PC-3 (cell line): ENCODE measurements at regions of chr6 and their contacts with region 1.

Region 1: GRCh38 chr6:163324411-163325389 is 89.8 kb upstream of the QKI start:
- DNase-seq: peak; percentile 82
- ATAC-seq: peak; percentile 91
- H3K4me3 ChIP-seq: peak overlapping the region; percentile 52
- H3K27ac ChIP-seq: peak overlapping the region; percentile 96
- H3K4me1 ChIP-seq: peaks cover 30% of the 10 kb centered on the region
- H3K27me3 ChIP-seq: no peaks in the 10 kb centered on the region
- CTCF ChIP-seq: no peak

Region 2: GRCh38 chr6:162856885-162857284 is 467.8 kb before region 1 on chr6:
- CTCF ChIA-PET with region 1: no interaction called
- POLR2A ChIA-PET with region 1: no interaction called
- intact Hi-C with region 1: loop called (anchors 10 kb)
- DNase-seq: peak; percentile 66
- ATAC-seq: peak; percentile 86
- H3K4me3 ChIP-seq: peak overlapping the region; percentile 50
- H3K27ac ChIP-seq: no peak overlapping the region
- H3K4me1 ChIP-seq: no peaks in the 10 kb centered on the region
- H3K27me3 ChIP-seq: no peaks in the 10 kb centered on the region
- CTCF ChIP-seq: peak; percentile 65

Region 3: DNA sequence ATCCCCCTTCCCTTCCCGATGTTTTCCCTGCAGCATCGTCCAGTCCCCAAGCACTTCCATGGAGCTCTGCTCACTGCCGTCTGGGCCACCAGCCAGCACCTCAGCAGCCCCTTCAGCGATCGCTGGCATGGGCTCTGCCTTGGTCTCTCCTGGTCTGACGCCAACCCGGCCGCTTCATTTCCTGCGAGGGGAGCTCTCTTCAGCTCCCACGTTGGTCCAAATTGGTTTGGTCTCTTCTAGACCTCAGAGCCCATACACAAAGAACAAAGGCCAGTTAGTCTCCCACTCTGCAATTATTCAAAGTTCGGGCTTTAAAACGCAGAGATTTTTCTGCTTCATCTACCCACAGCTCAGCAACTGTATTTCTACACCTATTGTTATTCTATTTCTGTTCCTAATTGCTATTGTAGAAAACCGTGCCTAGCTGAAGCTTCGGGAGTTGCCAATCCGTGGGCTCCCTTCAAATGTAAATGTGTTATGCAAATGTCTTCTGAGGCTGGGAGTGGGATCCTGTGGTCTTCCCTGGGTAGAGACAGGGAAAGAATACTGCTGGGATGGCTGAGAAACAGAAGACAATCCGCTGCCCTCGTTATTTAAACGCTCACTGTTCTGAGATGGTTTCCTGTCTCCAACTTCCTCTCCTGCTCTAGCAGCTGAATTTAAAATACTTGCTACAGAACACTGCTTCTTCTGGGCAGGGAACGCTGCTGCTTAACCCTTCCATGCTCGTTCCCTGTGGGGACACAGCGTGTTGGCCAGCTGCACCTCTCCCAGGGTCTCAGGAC is 64.4 kb before region 1 on chr6:
- CTCF ChIA-PET with region 1: no interaction called
- POLR2A ChIA-PET with region 1: no interaction called
- intact Hi-C with region 1: no loop called
- DNase-seq: no peak
- ATAC-seq: no peak
- H3K4me3 ChIP-seq: no peak overlapping the region
- H3K27ac ChIP-seq: no peak overlapping the region
- H3K4me1 ChIP-seq: no peaks in the 10 kb centered on the region
- H3K27me3 ChIP-seq: no peaks in the 10 kb centered on the region
- CTCF ChIP-seq: no peak

Region 4: DNA sequence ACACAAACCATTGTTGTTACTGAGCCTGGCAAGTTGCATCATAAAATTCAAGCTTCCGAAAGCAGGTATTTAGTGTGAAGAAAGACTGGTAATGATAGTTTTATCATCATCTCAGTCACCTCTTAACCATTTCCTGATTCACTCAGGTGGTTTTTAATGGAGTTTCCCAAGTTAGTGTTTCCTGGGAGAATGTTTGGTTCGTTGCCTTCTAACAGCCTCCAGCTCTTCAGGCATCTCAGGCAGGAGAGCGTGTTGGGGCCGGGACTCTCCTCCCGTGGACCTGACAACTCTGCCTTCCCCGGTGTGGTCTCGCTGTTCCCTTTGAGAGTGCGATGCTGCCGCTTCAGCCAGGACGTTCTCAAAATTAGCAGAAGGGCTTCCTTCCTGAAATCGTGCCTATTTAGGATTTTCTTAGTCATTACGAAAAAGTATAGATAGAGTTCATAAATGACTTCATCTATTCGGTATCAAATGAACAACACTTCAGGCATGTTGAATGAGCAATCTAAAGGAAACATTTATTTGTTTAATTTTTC is 15.1 kb before region 1 on chr6:
- CTCF ChIA-PET with region 1: interaction called, 4 read pairs
- POLR2A ChIA-PET with region 1: interaction called, 3 read pairs
- intact Hi-C with region 1: loop called (anchors 1 kb)
- DNase-seq: peak; percentile 82
- ATAC-seq: peak; percentile 65
- H3K4me3 ChIP-seq: peak overlapping the region; percentile 52
- H3K27ac ChIP-seq: peak overlapping the region; percentile 98
- H3K4me1 ChIP-seq: peaks cover 50% of the 10 kb centered on the region
- H3K27me3 ChIP-seq: no peaks in the 10 kb centered on the region
- CTCF ChIP-seq: no peak

Region 5: GRCh38 chr6:163355426-163355991 is 30.8 kb after region 1 on chr6:
- CTCF ChIA-PET with region 1: no interaction called
- POLR2A ChIA-PET with region 1: no interaction called
- intact Hi-C with region 1: loop called (anchors 1 kb)
- DNase-seq: peak; percentile 59
- ATAC-seq: peak; percentile 73
- H3K4me3 ChIP-seq: peak overlapping the region; percentile 54
- H3K27ac ChIP-seq: peak overlapping the region; percentile 76
- H3K4me1 ChIP-seq: peaks cover 39% of the 10 kb centered on the region
- H3K27me3 ChIP-seq: no peaks in the 10 kb centered on the region
- CTCF ChIP-seq: no peak

Region 6: GRCh38 chr6:163392533-163392932 is 67.8 kb after region 1 on chr6:
- CTCF ChIA-PET with region 1: no interaction called
- POLR2A ChIA-PET with region 1: no interaction called
- intact Hi-C with region 1: loop called (anchors 1 kb)
- DNase-seq: peak; percentile 81
- ATAC-seq: peak; percentile 66
- H3K4me3 ChIP-seq: peak overlapping the region; percentile 56
- H3K27ac ChIP-seq: peak overlapping the region; percentile 81
- H3K4me1 ChIP-seq: peaks cover 32% of the 10 kb centered on the region
- H3K27me3 ChIP-seq: no peaks in the 10 kb centered on the region
- CTCF ChIP-seq: no peak

Region 7: GRCh38 chr6:163413345-163414116 is 88.8 kb after region 1 on chr6:
- CTCF ChIA-PET with region 1: no interaction called
- POLR2A ChIA-PET with region 1: no interaction called
- intact Hi-C with region 1: loop called (anchors 1 kb)
- DNase-seq: peak; percentile 80
- ATAC-seq: peak; percentile 57
- H3K4me3 ChIP-seq: peak overlapping the region; percentile 74
- H3K27ac ChIP-seq: peak overlapping the region; percentile 72
- H3K4me1 ChIP-seq: peaks cover 9% of the 10 kb centered on the region; the same call in 1 of the 2 replicates
- H3K27me3 ChIP-seq: no peaks in the 10 kb centered on the region
- CTCF ChIP-seq: no peak